IMR-90 (cell line): ENCODE measurements at regions of chr11 and their contacts with region 1.

Region 1: DNA sequence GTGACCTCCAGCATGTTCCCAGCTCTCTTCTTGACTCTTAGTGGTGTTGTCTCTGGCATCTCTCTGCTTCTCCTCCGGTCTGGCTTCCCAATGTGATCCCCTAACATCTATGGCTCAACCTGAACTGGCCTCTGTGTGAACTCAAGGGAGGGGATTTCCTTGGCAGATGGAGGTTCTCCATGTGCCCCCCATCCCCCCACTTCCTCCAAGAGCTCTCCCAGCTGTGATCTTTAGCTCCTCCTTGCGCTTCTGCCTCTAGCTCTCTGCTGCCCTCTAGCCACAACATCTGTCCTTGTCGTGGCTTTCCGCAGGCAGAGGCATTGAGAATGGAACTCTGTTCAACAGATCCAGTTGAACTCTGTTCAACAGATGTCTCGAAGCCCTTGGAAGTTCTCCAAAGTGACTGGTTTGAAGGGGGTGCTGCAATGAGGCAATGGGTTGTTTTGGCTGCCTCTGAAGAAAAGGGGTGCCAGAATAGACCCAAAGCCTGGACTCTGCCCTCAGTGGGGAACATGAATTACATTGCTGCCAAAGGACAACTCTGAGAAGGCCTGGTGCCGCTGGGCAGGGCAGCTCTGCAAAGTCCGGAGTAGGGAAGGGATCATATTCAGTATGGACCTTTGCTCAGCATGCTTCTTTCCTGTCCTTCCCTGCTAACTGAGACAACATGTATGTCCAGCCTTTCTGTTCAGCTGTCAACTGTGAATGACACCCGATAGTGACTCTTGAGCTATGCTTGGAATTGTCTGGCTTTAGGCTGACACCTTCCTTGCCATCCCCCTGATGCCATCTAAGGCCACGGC is 61.9 kb downstream of the ADM start:
- DNase-seq: peak; percentile 98
- ATAC-seq: peak; percentile 96
- H3K4me3 ChIP-seq: no peak overlapping the region
- H3K27ac ChIP-seq: peak overlapping the region; percentile 32; the same call in 1 of the 2 replicates
- H3K4me1 ChIP-seq: peaks cover 4% of the 10 kb centered on the region
- H3K27me3 ChIP-seq: no peaks in the 10 kb centered on the region
- CTCF ChIP-seq: peak; percentile 94
- POLR2A ChIP-seq: no peak
- RAD21 ChIP-seq: peak; percentile 94

Region 2: GRCh38 chr11:10322830-10323792 is 43.7 kb before region 1 on chr11:
- CTCF ChIA-PET with region 1: interaction called, 13 read pairs
- POLR2A ChIA-PET with region 1: no interaction called
- dilution Hi-C with region 1: no loop called
- in situ Hi-C with region 1: no loop called
- intact Hi-C with region 1: loop called (anchors 5 kb)
- DNase-seq: peak; percentile 93
- ATAC-seq: peak; percentile 50
- H3K4me3 ChIP-seq: no peak overlapping the region
- H3K27ac ChIP-seq: peak overlapping the region; percentile 48; the same call in 1 of the 2 replicates
- H3K4me1 ChIP-seq: peaks cover 38% of the 10 kb centered on the region
- H3K27me3 ChIP-seq: no peaks in the 10 kb centered on the region
- CTCF ChIP-seq: peak; percentile 68
- POLR2A ChIP-seq: no peak
- RAD21 ChIP-seq: peak; percentile 67

Region 3: GRCh38 chr11:10328314-10329090 is 38.3 kb before region 1 on chr11:
- CTCF ChIA-PET with region 1: interaction called, 13 read pairs
- POLR2A ChIA-PET with region 1: no interaction called
- dilution Hi-C with region 1: no loop called
- in situ Hi-C with region 1: no loop called
- intact Hi-C with region 1: loop called (anchors 5 kb)
- DNase-seq: peak; percentile 46
- ATAC-seq: no peak
- H3K4me3 ChIP-seq: no peak overlapping the region
- H3K27ac ChIP-seq: peak overlapping the region; percentile 8; the same call in 1 of the 2 replicates
- H3K4me1 ChIP-seq: peaks cover 43% of the 10 kb centered on the region
- H3K27me3 ChIP-seq: no peaks in the 10 kb centered on the region
- CTCF ChIP-seq: no peak
- POLR2A ChIP-seq: no peak
- RAD21 ChIP-seq: no peak